Endothelial cell of umbilical vein (primary cell): ENCODE measurements at regions of chr16 and their contacts with region 1.

Region 1: DNA sequence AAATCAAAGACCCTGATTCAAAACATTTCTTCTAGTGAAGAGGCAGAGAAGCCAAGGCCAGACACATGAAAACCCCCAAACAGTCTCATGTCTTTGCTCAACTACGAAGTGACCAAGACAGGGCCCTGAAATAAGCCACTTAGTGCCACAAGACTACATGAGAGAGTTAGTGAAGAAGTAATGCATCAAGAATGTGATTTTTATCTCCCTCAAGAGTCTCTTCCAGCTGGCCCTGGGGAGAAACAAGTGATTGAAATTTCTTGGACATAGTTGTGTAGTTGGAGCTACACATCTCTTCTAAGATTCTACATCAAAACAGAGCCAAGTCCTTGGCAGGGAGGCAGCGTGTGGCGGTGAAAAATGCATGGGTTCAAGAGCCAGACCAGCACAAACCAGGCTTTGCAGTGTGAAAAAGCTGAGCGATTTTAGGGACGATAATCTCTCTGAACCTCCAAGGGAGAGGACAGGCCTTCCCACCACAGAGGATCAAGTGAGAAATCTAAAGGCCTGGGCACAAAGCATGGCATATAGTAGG is 30.6 kb downstream of the LYRM1 start:
- DNase-seq: no peak
- H3K4me3 ChIP-seq: no peak overlapping the region
- H3K27ac ChIP-seq: no peak overlapping the region
- H3K4me1 ChIP-seq: no peaks in the 10 kb centered on the region
- H3K27me3 ChIP-seq: no peaks in the 10 kb centered on the region
- CTCF ChIP-seq: no peak
- POLR2A ChIP-seq: no peak

Region 2: DNA sequence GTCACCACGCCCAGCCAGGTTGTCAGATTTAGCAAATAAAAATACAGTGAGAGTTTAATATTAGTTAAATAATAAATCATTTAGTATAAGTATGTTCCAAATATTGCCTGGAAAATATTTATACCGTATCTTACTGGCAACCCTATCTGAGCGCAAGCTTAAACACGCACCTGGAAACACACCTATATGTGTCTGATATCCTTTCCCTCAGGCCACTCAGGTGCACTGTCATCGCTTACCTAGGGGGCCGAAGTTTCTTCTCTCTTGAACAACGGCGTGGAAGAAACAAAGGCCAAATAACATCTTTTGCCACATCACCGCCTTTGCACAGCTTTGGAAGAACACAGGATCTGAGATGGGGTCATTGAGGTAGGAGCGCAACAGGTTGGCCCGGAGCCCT is 23.4 kb after region 1 on chr16:
- CTCF ChIA-PET with region 1: no interaction called
- POLR2A ChIA-PET with region 1: no interaction called
- dilution Hi-C with region 1: no loop called
- intact Hi-C with region 1: loop called (anchors 1 kb)
- DNase-seq: no peak
- H3K4me3 ChIP-seq: no peak overlapping the region
- H3K27ac ChIP-seq: no peak overlapping the region
- H3K4me1 ChIP-seq: no peaks in the 10 kb centered on the region
- H3K27me3 ChIP-seq: no peaks in the 10 kb centered on the region
- CTCF ChIP-seq: no peak
- POLR2A ChIP-seq: no peak